AG04449 (cell line): ENCODE measurements at regions of chr14 and their contacts with region 1.

Region 1: GRCh38 chr14:88667555-88668273 is 104.9 kb downstream of the ZC3H14 start:
- DNase-seq: peak; percentile 45
- H3K4me3 ChIP-seq: no peak overlapping the region
- CTCF ChIP-seq: peak; percentile 87

Region 2: GRCh38 chr14:88682495-88683114 is 14.9 kb after region 1 on chr14:
- CTCF ChIA-PET with region 1: interaction called, 78 read pairs
- POLR2A ChIA-PET with region 1: no interaction called
- DNase-seq: no peak
- H3K4me3 ChIP-seq: no peak overlapping the region
- CTCF ChIP-seq: no peak

Region 3: GRCh38 chr14:88792572-88793258 is 125.0 kb after region 1 on chr14 and contains the start of gene EML5:
- CTCF ChIA-PET with region 1: interaction called, 14 read pairs
- POLR2A ChIA-PET with region 1: no interaction called
- DNase-seq: no peak
- H3K4me3 ChIP-seq: peak within 1 kb of the TSS; percentile 72
- CTCF ChIP-seq: peak; percentile 28

Region 4: DNA sequence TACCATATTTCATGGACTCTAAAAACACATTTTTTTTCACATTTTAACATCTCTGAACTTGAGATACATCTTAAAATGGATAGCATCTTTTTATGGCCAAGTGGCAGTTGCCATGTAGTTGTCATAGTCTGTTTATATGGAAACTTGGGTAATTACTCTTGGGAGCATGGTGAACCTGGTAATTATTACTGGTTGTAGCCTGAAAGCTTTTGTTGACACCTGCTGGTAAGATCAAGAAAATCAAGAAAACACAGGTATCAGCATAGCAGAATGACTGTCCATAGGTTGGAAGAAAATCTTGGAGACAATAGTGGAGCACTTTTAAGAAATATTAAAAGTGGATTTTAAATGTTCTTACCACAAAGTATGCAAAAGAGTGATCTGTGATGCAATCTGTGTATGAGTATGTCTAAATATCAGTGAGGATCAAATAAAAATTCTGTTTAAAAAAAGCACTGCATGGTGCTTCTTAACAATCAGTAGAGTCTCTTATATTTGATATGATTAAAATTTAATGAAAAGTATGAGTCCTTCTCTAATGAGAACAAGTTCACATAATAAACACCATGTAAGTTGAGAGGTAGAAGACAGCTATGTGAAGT is 200.9 kb after region 1 on chr14:
- CTCF ChIA-PET with region 1: interaction called, 70 read pairs
- POLR2A ChIA-PET with region 1: no interaction called
- DNase-seq: no peak
- H3K4me3 ChIP-seq: no peak overlapping the region
- CTCF ChIP-seq: peak; percentile 17

Region 5: GRCh38 chr14:89013084-89013504 is 345.4 kb after region 1 on chr14:
- CTCF ChIA-PET with region 1: interaction called, 16 read pairs
- POLR2A ChIA-PET with region 1: no interaction called
- DNase-seq: no peak
- H3K4me3 ChIP-seq: no peak overlapping the region
- CTCF ChIP-seq: peak; percentile 25